PC-3 (cell line): ENCODE measurements at regions of chr1 and their contacts with region 1.

Region 1: GRCh38 chr1:180154325-180155181 is at the start of gene QSOX1:
- DNase-seq: peak; percentile 77
- ATAC-seq: peak; percentile 54
- H3K4me3 ChIP-seq: peak within 1 kb of the TSS; percentile 99
- H3K27ac ChIP-seq: peak within 1 kb of the TSS; percentile 99
- H3K4me1 ChIP-seq: peaks cover 62% of the 10 kb centered on the region
- H3K27me3 ChIP-seq: no peaks in the 10 kb centered on the region
- CTCF ChIP-seq: no peak
- total RNA-seq, gene QSOX1: 192 and 237 TPM in 2 replicates

Region 2: DNA sequence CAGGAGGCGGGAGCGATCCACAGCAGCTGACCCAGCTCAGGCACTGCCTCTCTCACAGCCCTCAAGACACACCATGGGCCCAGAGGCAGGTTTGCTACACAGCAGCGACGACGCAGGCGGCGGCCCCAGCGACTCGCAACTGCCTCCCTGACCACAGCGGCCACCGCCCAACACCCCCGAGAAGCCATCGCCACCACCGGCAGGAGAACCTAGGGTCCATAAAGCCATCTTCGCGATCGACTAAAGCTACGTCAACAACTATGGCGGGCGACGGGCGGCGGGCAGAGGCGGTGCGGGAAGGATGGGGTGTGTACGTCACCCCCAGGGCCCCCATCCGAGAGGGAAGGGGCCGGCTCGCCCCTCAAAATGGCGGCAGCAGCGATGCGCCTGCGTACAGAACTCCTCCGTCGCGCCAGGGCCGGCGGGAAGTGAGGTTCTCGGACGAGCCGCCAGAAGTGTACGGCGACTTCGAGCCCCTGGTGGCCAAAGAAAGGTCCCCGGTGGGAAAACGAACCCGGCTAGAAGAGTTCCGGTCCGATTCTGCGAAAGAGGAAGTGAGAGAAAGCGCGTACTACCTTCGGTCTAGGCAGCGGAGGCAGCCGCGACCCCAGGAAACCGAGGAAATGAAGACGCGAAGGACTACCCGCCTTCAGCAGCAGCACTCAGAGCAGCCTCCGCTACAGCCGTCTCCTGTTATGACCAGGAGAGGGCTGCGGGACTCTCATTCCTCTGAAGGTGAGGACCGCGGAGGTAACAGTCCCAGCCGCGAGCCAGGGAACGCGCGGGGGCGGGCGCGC is 272.1 kb before region 1 on chr1 and contains the start of gene TOR1AIP1:
- CTCF ChIA-PET with region 1: no interaction called
- POLR2A ChIA-PET with region 1: no interaction called
- intact Hi-C with region 1: loop called (anchors 5 kb)
- DNase-seq: peak; percentile 93
- ATAC-seq: peak; percentile 75
- H3K4me3 ChIP-seq: peak within 1 kb of the TSS; percentile 99
- H3K27ac ChIP-seq: peak within 1 kb of the TSS; percentile 96
- H3K4me1 ChIP-seq: peaks cover 11% of the 10 kb centered on the region; the same call in 1 of the 2 replicates
- H3K27me3 ChIP-seq: no peaks in the 10 kb centered on the region
- CTCF ChIP-seq: no peak
- total RNA-seq, gene TOR1AIP1: 14.8 and 21.3 TPM in 2 replicates

Region 3: DNA sequence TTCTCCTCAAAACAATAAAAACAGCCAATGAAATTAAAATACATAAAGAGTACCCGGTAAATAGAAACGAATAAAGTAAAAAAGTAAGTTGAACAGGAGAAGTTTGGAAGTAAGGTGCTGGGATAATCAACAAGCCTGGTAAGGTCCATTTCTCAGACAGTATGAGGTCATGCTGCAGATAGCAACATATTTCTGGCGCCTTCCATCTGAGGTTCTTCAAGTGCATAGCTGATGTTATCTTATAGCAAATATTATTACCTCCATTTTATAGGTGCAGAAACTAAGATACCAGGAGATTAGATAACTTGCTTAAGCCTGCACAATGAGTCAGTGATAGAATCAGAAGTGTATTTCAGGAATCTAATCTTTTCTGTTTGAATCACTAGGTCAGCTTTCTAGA is 223.7 kb before region 1 on chr1:
- CTCF ChIA-PET with region 1: no interaction called
- POLR2A ChIA-PET with region 1: no interaction called
- intact Hi-C with region 1: no loop called
- DNase-seq: no peak
- ATAC-seq: peak; percentile 18; the same call in 1 of the 2 replicates
- H3K4me3 ChIP-seq: no peak overlapping the region
- H3K27ac ChIP-seq: no peak overlapping the region
- H3K4me1 ChIP-seq: peaks cover 11% of the 10 kb centered on the region
- H3K27me3 ChIP-seq: no peaks in the 10 kb centered on the region
- CTCF ChIP-seq: no peak

Region 4: GRCh38 chr1:179954493-179955297 is 199.9 kb before region 1 on chr1 and contains the start of gene CEP350:
- CTCF ChIA-PET with region 1: no interaction called
- POLR2A ChIA-PET with region 1: no interaction called
- intact Hi-C with region 1: loop called (anchors 5 kb)
- DNase-seq: peak; percentile 97
- ATAC-seq: peak; percentile 92
- H3K4me3 ChIP-seq: peak within 1 kb of the TSS; percentile 92
- H3K27ac ChIP-seq: peak within 1 kb of the TSS; percentile 57
- H3K4me1 ChIP-seq: peaks cover 10% of the 10 kb centered on the region; the same call in 1 of the 2 replicates
- H3K27me3 ChIP-seq: no peaks in the 10 kb centered on the region
- CTCF ChIP-seq: no peak
- total RNA-seq, gene CEP350: 17.1 and 17.8 TPM in 2 replicates

Region 5: GRCh38 chr1:180070286-180070685 is 84.3 kb before region 1 on chr1:
- CTCF ChIA-PET with region 1: no interaction called
- POLR2A ChIA-PET with region 1: interaction called, 14 read pairs
- intact Hi-C with region 1: no loop called
- DNase-seq: no peak
- ATAC-seq: no peak
- H3K4me3 ChIP-seq: no peak overlapping the region
- H3K27ac ChIP-seq: no peak overlapping the region
- H3K4me1 ChIP-seq: no peaks in the 10 kb centered on the region
- H3K27me3 ChIP-seq: no peaks in the 10 kb centered on the region
- CTCF ChIP-seq: no peak

Region 6: GRCh38 chr1:180092931-180093559 is 61.5 kb before region 1 on chr1:
- CTCF ChIA-PET with region 1: interaction called, 3 read pairs
- POLR2A ChIA-PET with region 1: interaction called, 5 read pairs
- intact Hi-C with region 1: loop called (anchors 1 kb)
- DNase-seq: no peak
- ATAC-seq: no peak
- H3K4me3 ChIP-seq: no peak overlapping the region
- H3K27ac ChIP-seq: no peak overlapping the region
- H3K4me1 ChIP-seq: no peaks in the 10 kb centered on the region
- H3K27me3 ChIP-seq: no peaks in the 10 kb centered on the region
- CTCF ChIP-seq: no peak

Region 7: GRCh38 chr1:180123463-180123936 is 31.1 kb before region 1 on chr1:
- CTCF ChIA-PET with region 1: interaction called, 3 read pairs
- POLR2A ChIA-PET with region 1: interaction called, 14 read pairs
- intact Hi-C with region 1: loop called (anchors 1 kb)
- DNase-seq: peak; percentile 86
- ATAC-seq: peak; percentile 52
- H3K4me3 ChIP-seq: no peak overlapping the region
- H3K27ac ChIP-seq: peak overlapping the region; percentile 89
- H3K4me1 ChIP-seq: peaks cover 31% of the 10 kb centered on the region
- H3K27me3 ChIP-seq: no peaks in the 10 kb centered on the region
- CTCF ChIP-seq: no peak